Head of caudate nucleus (tissue), 42 donors: ENCODE measurements at regions of chr1 and their contacts with region 1.

Region 1: DNA sequence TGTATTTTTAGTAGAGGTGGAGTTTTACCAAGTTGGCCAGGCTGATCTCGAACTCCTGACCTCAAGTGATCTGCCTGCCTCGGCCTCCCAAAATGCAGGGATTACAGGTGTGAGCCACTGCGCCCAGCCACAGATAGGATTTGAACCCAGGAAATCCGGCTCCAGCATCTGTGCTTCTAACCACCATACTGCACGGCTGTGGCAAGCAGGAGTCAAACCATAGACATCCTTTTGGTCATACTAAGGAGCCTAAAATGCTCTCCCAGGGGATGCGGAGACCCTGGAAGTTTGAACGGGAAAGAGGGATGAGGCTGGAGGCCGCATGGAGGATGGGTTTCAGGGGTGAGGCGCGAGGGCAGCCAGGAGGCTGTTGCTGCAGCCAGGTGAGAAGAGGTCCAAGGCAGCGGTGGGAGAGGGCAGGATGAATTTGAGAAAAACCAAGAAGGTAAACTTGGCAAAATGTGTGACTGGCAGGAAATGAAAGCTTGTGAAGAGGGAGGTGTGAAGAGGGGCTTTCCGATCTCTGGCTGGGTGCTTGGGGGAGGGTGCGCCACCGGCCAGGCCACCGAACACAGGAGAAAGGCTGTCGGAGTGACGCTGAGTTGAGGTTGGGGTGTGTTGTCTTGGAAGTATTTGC is 24.0 kb upstream of the CDK18 start:
- DNase-seq: no peak

Region 2: GRCh38 chr1:205077158-205077933 is 403.1 kb before region 1 on chr1:
- intact Hi-C with region 1: no loop called
- DNase-seq: peak in 4 of 42 donors; percentile 17 to 48 (median 26)

Region 3: GRCh38 chr1:205430696-205431305 is 49.7 kb before region 1 on chr1:
- intact Hi-C with region 1: loop called (anchors 5 kb)
- DNase-seq: peak; percentile 24 to 86 (median 74)